ENCODE measurements at regions of chr6 and their contacts with region 1.

Region 1: GRCh38 chr6:26031595-26032339 is 55.5 kb upstream of the HFE start:
- DNase-seq: peak; percentile 84
- ATAC-seq: peak; percentile 66
- H3K4me3 Mint-ChIP-seq: peak overlapping the region; percentile 88
- H3K27ac Mint-ChIP-seq: peak overlapping the region; percentile 98
- H3K4me1 Mint-ChIP-seq: peaks cover 66% of the 10 kb centered on the region
- H3K27me3 Mint-ChIP-seq: peaks cover 3% of the 10 kb centered on the region

Region 2: GRCh38 chr6:26054857-26055669 is 23.3 kb after region 1 on chr6:
- POLR2A ChIA-PET with region 1: interaction called, 1,993 read pairs
- DNase-seq: peak; percentile 81
- ATAC-seq: peak; percentile 69
- H3K4me3 Mint-ChIP-seq: peak overlapping the region; percentile 96
- H3K27ac Mint-ChIP-seq: peak overlapping the region; percentile 100
- H3K4me1 Mint-ChIP-seq: peaks cover 32% of the 10 kb centered on the region
- H3K27me3 Mint-ChIP-seq: no peaks in the 10 kb centered on the region

Region 3: GRCh38 chr6:26196846-26197648 is 165.3 kb after region 1 on chr6:
- POLR2A ChIA-PET with region 1: interaction called, 291 read pairs
- DNase-seq: peak; percentile 83
- ATAC-seq: peak; percentile 44
- H3K4me3 Mint-ChIP-seq: peak overlapping the region; percentile 87
- H3K27ac Mint-ChIP-seq: peak overlapping the region; percentile 96
- H3K4me1 Mint-ChIP-seq: peaks cover 48% of the 10 kb centered on the region
- H3K27me3 Mint-ChIP-seq: no peaks in the 10 kb centered on the region

Region 4: GRCh38 chr6:26223650-26224546 is 192.1 kb after region 1 on chr6:
- POLR2A ChIA-PET with region 1: interaction called, 18 read pairs
- DNase-seq: peak; percentile 59
- ATAC-seq: peak; percentile 77
- H3K4me3 Mint-ChIP-seq: no peak overlapping the region
- H3K27ac Mint-ChIP-seq: no peak overlapping the region
- H3K4me1 Mint-ChIP-seq: peaks cover 29% of the 10 kb centered on the region
- H3K27me3 Mint-ChIP-seq: no peaks in the 10 kb centered on the region

Region 5: GRCh38 chr6:27825025-27825793 is 1793.4 kb after region 1 on chr6:
- POLR2A ChIA-PET with region 1: interaction called, 16 read pairs
- DNase-seq: no peak
- ATAC-seq: peak; percentile 2
- H3K4me3 Mint-ChIP-seq: peak overlapping the region; percentile 90
- H3K27ac Mint-ChIP-seq: peak overlapping the region; percentile 99
- H3K4me1 Mint-ChIP-seq: peaks cover 39% of the 10 kb centered on the region
- H3K27me3 Mint-ChIP-seq: no peaks in the 10 kb centered on the region

Region 6: GRCh38 chr6:27871924-27872638 is 1840.3 kb after region 1 on chr6:
- POLR2A ChIA-PET with region 1: interaction called, 113 read pairs
- DNase-seq: peak; percentile 80
- ATAC-seq: peak; percentile 63
- H3K4me3 Mint-ChIP-seq: peak overlapping the region; percentile 92
- H3K27ac Mint-ChIP-seq: peak overlapping the region; percentile 93
- H3K4me1 Mint-ChIP-seq: peaks cover 44% of the 10 kb centered on the region
- H3K27me3 Mint-ChIP-seq: no peaks in the 10 kb centered on the region

Measured in activated naive CD8-positive, alpha-beta T cell treated with anti-CD3 and anti-CD28 coated beads, Interleukin-2, amount 10 ng/mL, durations not matched to agents 7 days and 5 days (primary cell).